Heart right ventricle (tissue), 16 donors: ENCODE measurements at regions of chr10 and their contacts with region 1.

Region 1: GRCh38 chr10:104337974-104338735 is at the start of gene ITPRIP:
- DNase-seq: peak; percentile 70 to 84
- ATAC-seq: peak; percentile 75 to 88 (median 82)
- H3K4me3 ChIP-seq: peak within 1 kb of the TSS; percentile 86 to 98 (median 92)
- H3K27ac ChIP-seq: peak within 1 kb of the TSS; percentile 92 to 100 (median 99)
- H3K4me1 ChIP-seq: peaks cover 5 to 73% (median 61%) of the 10 kb centered on the region in 9 donors
- H3K27me3 ChIP-seq: no peaks in the 10 kb centered on the region
- CTCF ChIP-seq: peak in 4 of 9 donors; percentile 26 to 44 (median 38)
- total RNA-seq, gene ITPRIP: 18.6 to 87.2 (median 35.9) TPM

Region 2: DNA sequence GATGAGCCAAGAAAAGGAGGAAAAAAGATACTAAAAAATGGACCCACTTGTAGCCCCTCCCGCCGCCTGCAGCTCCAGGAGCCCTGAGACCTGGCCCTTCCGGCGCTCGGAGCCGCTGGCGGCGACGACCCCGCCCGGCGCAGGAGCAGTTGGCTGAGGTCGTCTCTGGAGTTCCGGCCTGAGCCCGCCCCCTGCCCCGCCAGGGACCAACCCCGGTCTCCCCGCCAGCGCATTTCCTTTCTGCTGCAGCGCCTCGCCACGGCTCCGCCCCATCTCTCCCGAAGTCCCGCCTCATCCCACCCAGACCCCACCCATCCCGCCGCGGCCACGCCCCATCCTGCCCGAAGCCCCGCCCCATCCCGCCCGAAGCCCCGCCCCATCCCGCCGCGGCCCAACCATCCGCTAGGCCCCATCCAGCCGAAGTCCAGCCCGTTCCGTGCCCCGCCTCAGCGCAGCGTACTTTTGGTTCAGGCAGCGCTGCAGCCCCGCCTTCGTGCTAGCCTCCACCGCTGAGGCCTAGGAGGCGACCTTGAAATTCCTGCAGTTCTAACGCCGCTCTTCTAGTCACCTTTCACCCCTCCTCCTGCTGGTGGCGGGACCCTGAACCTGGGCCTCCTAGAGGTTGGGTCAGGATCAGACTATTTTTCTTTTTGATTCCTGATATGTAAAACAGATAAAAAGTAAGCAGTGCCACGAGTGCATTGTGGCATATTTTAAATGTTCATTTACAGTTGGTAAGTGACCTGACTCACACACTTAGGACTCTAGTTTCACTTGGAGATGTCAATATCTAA is 419.9 kb before region 1 on chr10 and contains the start of gene STN1:
- intact Hi-C with region 1: loop called in 1 of 10 experiments (anchors 10 kb)
- DNase-seq: peak; percentile 97 to 99
- ATAC-seq: peak; percentile 97 to 99 (median 98)
- H3K4me3 ChIP-seq: peak within 1 kb of the TSS; percentile 48 to 88 (median 79)
- H3K27ac ChIP-seq: peak within 1 kb of the TSS; percentile 92 to 99 (median 96)
- H3K4me1 ChIP-seq: peaks cover 10 to 51% (median 34%) of the 10 kb centered on the region in 9 donors
- H3K27me3 ChIP-seq: no peaks in the 10 kb centered on the region
- CTCF ChIP-seq: peak in 3 of 9 donors; percentile 5 to 13 (median 10)
- total RNA-seq, gene STN1: 24.7 to 38.7 (median 31.4) TPM

Region 3: GRCh38 chr10:104300736-104301292 is 37.3 kb before region 1 on chr10:
- intact Hi-C with region 1: loop called in 8 of 10 experiments (anchors 1 to 5 kb)
- DNase-seq: peak; percentile 67 to 85
- ATAC-seq: peak; percentile 43 to 90 (median 76)
- H3K4me3 ChIP-seq: peak overlapping the region in 2 of 10 donors; percentile 9 to 10
- H3K27ac ChIP-seq: peak overlapping the region; percentile 81 to 95 (median 92)
- H3K4me1 ChIP-seq: peaks cover 23 to 82% (median 74%) of the 10 kb centered on the region in 9 donors
- H3K27me3 ChIP-seq: no peaks in the 10 kb centered on the region
- CTCF ChIP-seq: peak in 3 of 9 donors; percentile 18 to 31 (median 22)

Region 4: GRCh38 chr10:104308439-104308903 is 29.7 kb before region 1 on chr10:
- intact Hi-C with region 1: loop called in 5 of 10 experiments (anchors 1 to 5 kb)
- DNase-seq: no peak
- ATAC-seq: no peak
- H3K4me3 ChIP-seq: no peak overlapping the region
- H3K27ac ChIP-seq: peak overlapping the region in 8 of 10 donors; percentile 8 to 95 (median 86)
- H3K4me1 ChIP-seq: peaks cover 25 to 100% (median 75%) of the 10 kb centered on the region in 9 donors
- H3K27me3 ChIP-seq: no peaks in the 10 kb centered on the region
- CTCF ChIP-seq: no peak